Thyroid gland (tissue), 4 donors: ENCODE measurements at regions of chr9 and their contacts with region 1.

Region 1: GRCh38 chr9:105610381-105610780 is 51.9 kb upstream of the TAL2 start:
- DNase-seq: no peak
- H3K4me3 ChIP-seq: no peak overlapping the region
- H3K27ac ChIP-seq: no peak overlapping the region
- H3K4me1 ChIP-seq: no peaks in the 10 kb centered on the region
- H3K27me3 ChIP-seq: no peaks in the 10 kb centered on the region
- CTCF ChIP-seq: no peak
- POLR2A ChIP-seq: no peak

Region 2: DNA sequence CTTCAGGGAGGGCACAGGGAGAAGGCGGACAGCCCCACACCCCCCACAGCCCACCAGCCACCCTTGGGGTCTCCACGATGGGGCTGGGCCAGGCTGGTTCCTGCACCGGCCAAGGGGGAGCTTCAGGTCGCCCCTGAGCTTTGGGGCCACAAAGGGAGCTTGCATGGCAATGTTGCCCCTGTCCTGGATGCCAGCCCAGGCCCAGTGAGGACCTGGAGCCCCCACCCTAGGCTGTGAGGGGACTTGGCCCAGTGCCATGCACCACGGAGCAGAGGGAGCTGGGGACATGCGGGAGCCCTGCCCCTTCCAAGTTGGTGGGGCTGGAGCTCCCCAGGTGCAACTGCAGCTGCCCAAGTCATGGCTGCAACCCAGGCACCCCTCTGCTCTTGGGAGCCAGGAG is 102.4 kb after region 1 on chr9:
- intact Hi-C with region 1: loop called (anchors 10 kb)
- DNase-seq: no peak
- H3K4me3 ChIP-seq: no peak overlapping the region
- H3K27ac ChIP-seq: peak overlapping the region in 1 of 3 donors; percentile 52
- H3K4me1 ChIP-seq: peaks cover 7 to 10% of the 10 kb centered on the region in 2 donors
- H3K27me3 ChIP-seq: no peaks in the 10 kb centered on the region
- CTCF ChIP-seq: no peak
- POLR2A ChIP-seq: no peak